ENCODE measurements at regions of chr1 and their contacts with region 1.

Region 1: DNA sequence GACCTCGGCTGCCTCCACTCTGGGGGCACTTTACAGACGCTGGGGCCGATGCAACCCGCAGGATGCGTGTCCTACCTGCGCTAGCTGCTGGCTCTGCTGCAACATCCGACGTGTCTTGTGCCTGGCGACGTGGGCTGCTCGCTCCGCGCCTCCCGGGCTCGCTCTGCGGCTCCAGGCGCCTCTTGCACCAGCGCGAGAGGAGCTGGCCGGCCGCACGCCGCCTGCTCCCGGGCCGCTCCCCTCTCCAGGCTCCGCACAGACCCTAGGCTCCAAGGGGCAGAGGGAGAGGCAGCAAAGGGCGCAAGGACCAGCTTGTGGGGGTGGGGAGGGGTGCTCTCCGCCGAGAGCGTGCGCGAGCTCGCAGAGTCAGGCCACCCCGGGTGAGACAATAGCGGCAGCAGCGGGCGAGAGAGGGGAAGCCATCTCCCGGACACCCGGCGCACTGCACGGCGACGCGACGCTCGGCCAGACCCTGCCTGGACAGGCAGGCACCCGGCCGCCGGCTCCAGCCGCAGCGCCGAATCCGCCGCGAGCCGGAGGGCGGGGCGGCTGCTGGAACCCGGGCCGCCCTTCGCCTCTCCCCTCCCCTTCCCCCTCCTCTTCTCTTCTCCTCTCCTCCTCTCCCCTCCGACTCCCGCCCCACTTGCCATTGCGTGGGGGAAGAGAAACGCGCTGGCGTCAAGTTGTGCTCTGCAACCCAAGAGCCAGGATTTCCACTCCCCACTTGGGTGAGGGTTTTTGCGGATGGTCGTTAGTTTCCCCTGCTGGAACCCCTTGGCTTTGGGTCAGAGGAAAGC is at the start of gene PIK3C2B:
- DNase-seq: peak; percentile 86
- ATAC-seq: peak; percentile 91
- H3K4me3 Mint-ChIP-seq: peak within 1 kb of the TSS; percentile 93
- H3K27ac Mint-ChIP-seq: peak within 1 kb of the TSS; percentile 64
- H3K4me1 Mint-ChIP-seq: peaks cover 33% of the 10 kb centered on the region
- H3K27me3 Mint-ChIP-seq: peaks cover 5% of the 10 kb centered on the region
- CTCF ChIP-seq: no peak
- total RNA-seq, gene PIK3C2B: 20.8 to 27.7 TPM (median 22.6 TPM) in 3 replicates

Region 2: GRCh38 chr1:204456826-204457442 is 37.5 kb before region 1 on chr1:
- CTCF ChIA-PET with region 1: interaction called, 906 read pairs
- POLR2A ChIA-PET with region 1: interaction called, 6 read pairs
- DNase-seq: no peak
- ATAC-seq: no peak; the same call in 1 of the 2 replicates
- H3K4me3 Mint-ChIP-seq: no peak overlapping the region
- H3K27ac Mint-ChIP-seq: no peak overlapping the region
- H3K4me1 Mint-ChIP-seq: peaks cover 52% of the 10 kb centered on the region
- H3K27me3 Mint-ChIP-seq: no peaks in the 10 kb centered on the region
- CTCF ChIP-seq: no peak

Region 3: DNA sequence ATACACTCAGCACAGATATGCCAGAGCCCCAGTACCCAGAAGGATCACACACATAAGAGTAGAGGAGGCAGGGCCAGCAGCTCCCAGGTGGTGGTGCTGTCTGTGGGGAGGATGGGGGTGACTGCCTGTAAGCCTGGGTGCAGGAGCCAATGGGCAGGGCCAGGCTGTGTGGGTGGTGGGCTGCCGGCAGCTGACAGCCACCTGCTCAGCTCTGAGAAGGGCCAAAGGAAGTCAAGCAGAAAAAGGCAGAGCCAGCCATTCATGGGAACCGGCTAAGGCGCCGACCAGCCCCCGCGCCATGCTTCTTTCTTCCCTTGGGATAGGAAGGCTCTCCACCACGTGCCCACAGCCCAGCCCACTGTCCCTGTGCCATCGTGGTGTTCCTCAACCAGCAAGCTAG is 14.0 kb before region 1 on chr1:
- CTCF ChIA-PET with region 1: interaction called, 103 read pairs
- POLR2A ChIA-PET with region 1: interaction called, 7 read pairs
- DNase-seq: no peak
- ATAC-seq: no peak
- H3K4me3 Mint-ChIP-seq: no peak overlapping the region
- H3K27ac Mint-ChIP-seq: no peak overlapping the region
- H3K4me1 Mint-ChIP-seq: peaks cover 61% of the 10 kb centered on the region
- H3K27me3 Mint-ChIP-seq: no peaks in the 10 kb centered on the region; the same call in 1 of the 2 replicates
- CTCF ChIP-seq: no peak

Region 4: GRCh38 chr1:204506961-204507387 is 12.5 kb after region 1 on chr1:
- CTCF ChIA-PET with region 1: interaction called, 55 read pairs
- POLR2A ChIA-PET with region 1: interaction called, 16 read pairs
- DNase-seq: peak; percentile 84
- ATAC-seq: peak; percentile 75
- H3K4me3 Mint-ChIP-seq: peak overlapping the region; percentile 96
- H3K27ac Mint-ChIP-seq: peak overlapping the region; percentile 98
- H3K4me1 Mint-ChIP-seq: peaks cover 11% of the 10 kb centered on the region
- H3K27me3 Mint-ChIP-seq: peaks cover 3% of the 10 kb centered on the region; the same call in 1 of the 2 replicates
- CTCF ChIP-seq: no peak

Region 5: GRCh38 chr1:204516180-204516879 is 21.9 kb after region 1 on chr1 and contains the start of gene MDM4:
- CTCF ChIA-PET with region 1: interaction called, 4 read pairs
- POLR2A ChIA-PET with region 1: interaction called, 13 read pairs
- DNase-seq: peak; percentile 91
- ATAC-seq: peak; percentile 98
- H3K4me3 Mint-ChIP-seq: no peak within 1 kb of the TSS
- H3K27ac Mint-ChIP-seq: no peak within 1 kb of the TSS
- H3K4me1 Mint-ChIP-seq: peaks cover 12% of the 10 kb centered on the region
- H3K27me3 Mint-ChIP-seq: peaks cover under 1% of the 10 kb centered on the region; the same call in 1 of the 2 replicates
- CTCF ChIP-seq: no peak
- total RNA-seq, gene MDM4: 73.5 to 76.2 TPM (median 74.1 TPM) in 3 replicates

Region 6: DNA sequence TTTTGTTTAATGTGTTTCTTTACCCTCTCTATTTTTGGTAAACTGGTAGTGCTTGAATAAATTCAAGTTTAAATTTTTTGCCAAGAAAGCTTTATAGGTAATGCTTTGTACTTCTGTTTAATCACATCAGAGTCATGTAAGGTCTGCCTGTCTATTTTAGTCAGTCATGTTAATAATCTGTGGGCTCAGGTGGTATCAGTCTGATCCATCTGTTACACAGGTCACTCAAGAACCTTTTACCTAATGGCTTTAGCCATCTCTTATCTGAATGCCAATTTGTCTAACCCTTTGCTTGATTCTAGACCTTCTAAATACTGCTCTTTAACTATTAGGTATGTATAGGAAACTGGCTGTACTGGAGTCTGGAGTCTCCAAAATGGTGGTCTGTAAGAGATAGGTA is 38.4 kb after region 1 on chr1:
- CTCF ChIA-PET with region 1: no interaction called
- POLR2A ChIA-PET with region 1: no interaction called
- DNase-seq: no peak
- ATAC-seq: no peak
- H3K4me3 Mint-ChIP-seq: no peak overlapping the region
- H3K27ac Mint-ChIP-seq: no peak overlapping the region
- H3K4me1 Mint-ChIP-seq: no peaks in the 10 kb centered on the region
- H3K27me3 Mint-ChIP-seq: no peaks in the 10 kb centered on the region
- CTCF ChIP-seq: no peak

Measured in WTC11 (cell line).